Esophagus muscularis mucosa (tissue), 4 donors: ENCODE measurements at regions of chr1 and their contacts with region 1.

Region 1: GRCh38 chr1:22704440-22705067 is 6.1 kb upstream of the EPHB2 start:
- DNase-seq: peak; percentile 96
- H3K4me3 ChIP-seq: no peak overlapping the region
- H3K27ac ChIP-seq: no peak overlapping the region
- H3K4me1 ChIP-seq: peaks cover 0 to 1% (median 0%) of the 10 kb centered on the region in 4 donors
- H3K27me3 ChIP-seq: peaks cover 0 to 13% (median 0%) of the 10 kb centered on the region in 4 donors
- CTCF ChIP-seq: peak; percentile 89 to 90 (median 90)
- EP300 ChIP-seq: no peak
- POLR2A ChIP-seq: no peak

Region 2: GRCh38 chr1:22889213-22889827 is 184.8 kb after region 1 on chr1:
- intact Hi-C with region 1: loop called (anchors 5 kb)
- DNase-seq: no peak
- H3K4me3 ChIP-seq: no peak overlapping the region
- H3K27ac ChIP-seq: no peak overlapping the region
- H3K4me1 ChIP-seq: no peaks in the 10 kb centered on the region
- H3K27me3 ChIP-seq: peaks cover 0 to 19% (median 0%) of the 10 kb centered on the region in 4 donors
- CTCF ChIP-seq: peak; percentile 50 to 74 (median 61)
- EP300 ChIP-seq: no peak
- POLR2A ChIP-seq: no peak

Region 3: DNA sequence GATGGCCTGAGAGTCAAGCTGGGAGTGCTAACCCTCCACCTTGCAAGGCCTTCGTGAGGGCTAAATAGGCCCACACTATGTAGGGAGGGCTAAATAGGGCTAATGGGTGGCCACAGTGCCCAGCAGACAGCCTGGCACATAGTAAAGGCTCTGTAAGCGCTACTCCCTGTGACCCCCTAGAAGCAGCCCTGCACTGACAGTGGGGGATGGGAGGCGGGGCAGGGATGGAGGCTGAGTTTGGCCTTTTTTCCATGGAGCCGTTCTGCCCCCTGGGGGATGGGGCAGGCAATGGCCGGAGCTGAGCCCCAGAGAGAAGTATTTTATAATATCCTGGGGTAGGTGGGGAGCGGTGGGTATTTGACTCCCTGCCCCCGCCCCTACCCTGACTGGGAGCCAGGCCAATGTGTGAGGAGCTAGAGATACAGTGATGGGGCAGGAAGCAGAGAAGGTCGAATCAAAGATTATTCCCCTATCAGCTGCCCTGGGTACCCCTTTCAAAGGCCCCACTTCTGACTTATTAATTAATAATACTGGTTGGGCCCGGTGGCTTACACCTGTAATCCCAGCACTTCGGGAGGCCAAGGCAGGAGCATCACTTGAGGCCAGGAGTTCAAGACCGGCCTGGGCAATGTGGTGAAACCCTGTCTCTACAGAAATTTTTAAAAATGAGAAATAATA is 225.8 kb after region 1 on chr1:
- intact Hi-C with region 1: loop called (anchors 2 kb)
- DNase-seq: no peak
- H3K4me3 ChIP-seq: no peak overlapping the region
- H3K27ac ChIP-seq: no peak overlapping the region
- H3K4me1 ChIP-seq: no peaks in the 10 kb centered on the region
- H3K27me3 ChIP-seq: peaks cover 0 to 34% (median 0%) of the 10 kb centered on the region in 4 donors
- CTCF ChIP-seq: peak; percentile 62 to 72 (median 72)
- EP300 ChIP-seq: no peak
- POLR2A ChIP-seq: no peak